Common myeloid progenitor, CD34-positive (primary cell): ENCODE measurements at regions of chr9 and their contacts with region 1.

Region 1: DNA sequence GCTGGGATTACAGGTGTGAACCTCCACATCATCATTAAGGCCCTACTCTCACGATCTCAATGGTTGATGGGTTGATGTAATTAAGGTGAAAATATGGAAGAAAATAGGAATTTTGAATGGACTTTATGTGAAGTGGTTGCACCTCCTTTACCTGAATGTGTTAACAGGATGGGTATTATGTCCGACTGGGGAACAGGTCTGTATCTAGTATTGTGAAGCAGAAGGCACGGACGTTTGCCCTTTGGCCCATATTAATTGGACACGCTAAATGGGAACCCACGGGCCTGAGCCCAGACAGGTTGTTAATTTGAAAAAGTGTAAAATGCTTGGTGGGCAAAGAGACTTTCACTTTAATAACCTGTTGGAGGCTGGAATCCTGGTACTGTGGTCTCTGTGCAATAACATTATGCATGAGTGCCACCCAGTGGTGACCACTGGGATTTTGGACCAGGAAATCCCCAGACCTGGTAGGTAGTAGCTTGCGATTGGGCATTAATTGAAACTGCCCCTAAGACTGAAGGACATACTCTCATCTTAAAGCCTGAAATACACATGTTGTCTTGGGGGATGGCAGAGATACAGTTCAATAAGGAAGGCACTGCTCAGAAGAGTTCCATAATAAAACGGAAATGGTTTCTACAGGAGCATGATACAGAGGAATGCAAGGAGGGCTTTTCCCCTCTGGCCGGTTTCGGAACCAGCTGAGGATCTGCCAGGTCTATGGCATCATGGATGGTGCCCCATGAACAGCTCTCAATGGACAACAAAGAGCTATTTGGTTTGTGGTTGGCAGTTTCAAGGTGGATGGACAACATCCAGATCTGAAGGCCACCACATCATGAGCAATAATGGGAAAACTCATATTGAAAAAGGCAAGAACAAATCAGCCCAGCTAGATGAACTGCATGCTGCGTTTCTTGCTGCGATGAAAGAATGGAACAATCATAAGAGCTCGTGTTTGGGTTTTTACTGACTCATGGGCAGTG is 26.2 kb upstream of the BICD2 start:
- DNase-seq: peak; percentile 82 to 93 (median 88)
- H3K4me3 ChIP-seq: peak overlapping the region in 1 of 7 experiments; percentile 45
- H3K27ac ChIP-seq: no peak overlapping the region
- H3K4me1 ChIP-seq: peaks cover 0 to 8% (median 3%) of the 10 kb centered on the region in 4 experiments
- H3K27me3 ChIP-seq: no peaks in the 10 kb centered on the region

Region 2: DNA sequence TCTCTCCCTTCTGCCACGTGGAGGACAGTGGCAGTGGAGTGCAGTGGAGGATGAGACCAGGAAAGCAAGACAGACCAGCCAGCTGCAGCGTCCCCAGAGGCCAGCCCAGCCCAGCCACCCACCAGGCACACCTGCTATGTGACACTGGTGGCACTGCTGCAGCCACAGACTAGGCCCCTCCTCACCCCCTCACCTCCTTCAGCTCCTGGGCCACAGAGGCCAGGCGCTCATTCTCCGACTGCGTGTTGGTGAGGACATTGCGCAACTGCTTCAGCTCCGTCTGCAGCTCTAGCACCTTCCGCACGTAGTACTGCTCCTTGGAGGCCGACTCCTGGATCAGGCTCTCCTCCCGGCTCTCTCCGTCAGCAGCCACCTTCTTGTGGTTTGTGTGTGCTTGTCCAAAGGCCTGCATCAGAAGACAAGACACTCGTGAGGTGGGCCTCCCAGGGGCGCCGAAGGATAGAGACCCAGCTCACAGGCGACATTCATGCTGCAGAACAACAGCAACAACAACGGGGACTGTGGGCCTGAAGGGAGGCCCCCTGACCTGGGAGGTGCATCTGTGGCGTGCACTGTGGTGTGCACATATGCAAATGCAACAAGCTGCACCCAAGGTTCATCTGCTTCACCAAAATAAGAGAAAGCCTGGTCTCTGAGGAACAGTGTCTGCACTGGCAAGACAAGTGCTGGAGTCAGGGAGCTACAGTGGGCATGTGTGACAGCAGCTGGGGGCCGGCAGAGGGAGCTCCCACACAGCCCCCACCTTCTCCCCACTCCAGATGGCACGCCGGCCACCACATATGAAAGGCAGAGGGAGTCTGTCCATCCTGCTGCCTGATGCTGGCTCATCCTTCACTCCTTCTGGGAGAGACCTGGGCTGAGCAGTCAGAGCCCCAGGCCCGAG is 61.8 kb before region 1 on chr9:
- CTCF ChIA-PET with region 1: interaction called, 39 read pairs
- POLR2A ChIA-PET with region 1: no interaction called
- DNase-seq: peak in 2 of 3 donors; percentile 45 to 50
- H3K4me3 ChIP-seq: no peak overlapping the region
- H3K27ac ChIP-seq: no peak overlapping the region
- H3K4me1 ChIP-seq: peaks cover 0 to 15% (median 5%) of the 10 kb centered on the region in 4 experiments
- H3K27me3 ChIP-seq: no peaks in the 10 kb centered on the region

Region 3: GRCh38 chr9:92760070-92760469 is 30.8 kb before region 1 on chr9:
- CTCF ChIA-PET with region 1: interaction called, 13 read pairs
- POLR2A ChIA-PET with region 1: interaction called, 4 read pairs
- DNase-seq: no peak
- H3K4me3 ChIP-seq: no peak overlapping the region
- H3K27ac ChIP-seq: peak overlapping the region; percentile 10 to 56
- H3K4me1 ChIP-seq: peaks cover 14 to 52% (median 48%) of the 10 kb centered on the region in 4 experiments
- H3K27me3 ChIP-seq: no peaks in the 10 kb centered on the region

Region 4: DNA sequence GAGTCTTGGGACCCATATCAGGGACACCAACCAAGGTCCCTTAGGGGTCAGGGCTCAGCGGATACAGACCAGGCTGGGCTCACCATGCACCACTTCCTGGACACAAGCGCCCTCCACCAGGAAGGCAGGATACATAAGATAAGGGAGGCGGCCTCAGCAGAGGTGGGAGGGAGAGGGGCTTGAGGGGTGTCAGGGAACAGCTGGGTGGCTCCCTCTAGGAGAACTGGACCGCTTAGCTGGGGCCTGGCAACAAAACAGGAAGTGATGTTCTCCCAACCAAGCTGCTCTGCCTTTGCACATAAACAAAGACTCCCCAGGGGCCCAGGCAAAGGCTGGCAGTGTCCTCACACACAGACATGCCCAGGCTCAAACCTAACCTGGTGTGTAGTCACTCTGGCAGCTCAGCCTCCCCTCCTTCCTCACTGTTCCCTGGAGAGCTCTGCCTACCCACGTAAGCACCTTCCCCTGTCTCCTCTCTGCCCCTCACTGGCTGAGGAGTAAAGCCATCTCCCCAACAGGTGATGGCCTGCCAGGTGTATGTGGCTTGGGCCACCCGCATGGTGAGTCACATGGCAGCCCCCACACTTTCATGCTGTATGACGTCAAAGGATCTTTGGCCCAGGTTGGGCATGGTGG is 20.4 kb before region 1 on chr9:
- CTCF ChIA-PET with region 1: interaction called, 42 read pairs
- POLR2A ChIA-PET with region 1: no interaction called
- DNase-seq: peak; percentile 71 to 94 (median 88)
- H3K4me3 ChIP-seq: peak overlapping the region in 1 of 7 experiments; percentile 1
- H3K27ac ChIP-seq: peak overlapping the region; percentile 35 to 78
- H3K4me1 ChIP-seq: peaks cover 6 to 31% (median 25%) of the 10 kb centered on the region in 4 experiments
- H3K27me3 ChIP-seq: no peaks in the 10 kb centered on the region